Vagina (tissue), 2 donors: ENCODE measurements at regions of chr2 and their contacts with region 1.

Region 1: DNA sequence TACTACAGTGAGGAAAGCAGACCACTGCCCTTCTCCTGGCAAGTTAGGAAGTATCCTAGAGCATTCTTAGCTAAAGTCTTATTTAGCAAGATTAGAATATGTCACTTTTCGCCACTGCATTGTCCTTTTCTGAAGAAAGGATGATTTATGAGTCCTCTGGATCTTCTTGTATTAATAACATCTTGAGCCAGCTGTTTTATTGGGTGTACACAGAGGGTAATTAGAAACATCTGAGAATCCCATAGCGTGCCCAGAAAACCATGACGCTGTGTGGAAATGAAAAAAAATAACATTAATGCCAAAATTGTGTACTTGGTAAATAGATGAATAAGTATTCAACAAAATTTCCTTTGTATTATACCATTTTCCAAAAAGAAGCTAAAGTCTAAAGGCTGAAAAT is 198.7 kb downstream of the LTBP1 start:
- DNase-seq: no peak
- H3K4me3 ChIP-seq: no peak overlapping the region
- H3K27ac ChIP-seq: peak overlapping the region; percentile 42
- H3K4me1 ChIP-seq: peaks cover 61% of the 10 kb centered on the region
- H3K27me3 ChIP-seq: no peaks in the 10 kb centered on the region
- CTCF ChIP-seq: no peak
- POLR2A ChIP-seq: no peak

Region 2: DNA sequence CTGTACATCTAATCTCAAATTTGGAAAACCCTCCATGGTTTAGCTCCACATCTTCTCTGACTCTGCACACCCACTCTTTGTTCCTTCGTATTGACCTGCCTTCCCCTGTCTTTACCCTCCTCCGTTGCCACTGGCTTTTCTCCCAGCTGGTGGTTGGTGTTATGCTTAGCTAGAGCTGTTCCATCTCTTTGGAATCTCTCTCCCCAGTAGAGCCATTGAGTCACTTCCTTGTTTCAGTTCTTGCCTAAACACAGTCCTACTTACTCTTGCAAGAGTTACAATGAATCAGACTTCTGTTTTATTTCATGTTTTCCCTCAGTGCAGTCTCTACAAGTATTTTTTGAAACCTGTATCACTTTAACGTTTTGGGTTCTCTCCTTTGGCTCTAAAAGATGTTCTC is 65.2 kb after region 1 on chr2:
- intact Hi-C with region 1: loop called (anchors 10 kb)
- DNase-seq: no peak
- H3K4me3 ChIP-seq: no peak overlapping the region
- H3K27ac ChIP-seq: peak overlapping the region; percentile 25
- H3K4me1 ChIP-seq: peaks cover 41% of the 10 kb centered on the region
- H3K27me3 ChIP-seq: no peaks in the 10 kb centered on the region
- CTCF ChIP-seq: no peak
- POLR2A ChIP-seq: no peak